ENCODE measurements at regions of chr6 and their contacts with region 1.

Region 1: GRCh38 chr6:104859225-104860146 is at the start of gene HACE1:
- DNase-seq: peak; percentile 75 to 91 (median 89)
- ATAC-seq: peak; percentile 98
- H3K4me3 ChIP-seq: peak within 1 kb of the TSS; percentile 79
- H3K4me3 Mint-ChIP-seq: peak within 1 kb of the TSS; percentile 87 to 95 (median 92)
- H3K27ac ChIP-seq: peak within 1 kb of the TSS; percentile 69
- H3K27ac Mint-ChIP-seq: peak within 1 kb of the TSS; percentile 18 to 92 (median 86)
- H3K4me1 ChIP-seq: peaks cover 8 to 9% of the 10 kb centered on the region in 2 donors
- H3K4me1 Mint-ChIP-seq: peaks cover 10 to 30% (median 18%) of the 10 kb centered on the region in 7 donors
- H3K27me3 ChIP-seq: no peaks in the 10 kb centered on the region
- H3K27me3 Mint-ChIP-seq: peaks cover 3 to 20% (median 13%) of the 10 kb centered on the region in 5 donors
- total RNA-seq, gene HACE1: 11.4 to 17.1 (median 16.1) TPM

Region 2: GRCh38 chr6:104689551-104690205 is 169.8 kb before region 1 on chr6:
- CTCF ChIA-PET with region 1: no interaction called
- POLR2A ChIA-PET with region 1: no interaction called
- intact Hi-C with region 1: loop called in 1 of 2 experiments (anchors 5 kb)
- DNase-seq: no peak
- ATAC-seq: no peak
- H3K4me3 ChIP-seq: no peak overlapping the region
- H3K4me3 Mint-ChIP-seq: no peak overlapping the region
- H3K27ac ChIP-seq: no peak overlapping the region
- H3K27ac Mint-ChIP-seq: peak overlapping the region in 1 of 9 donors; percentile 2
- H3K4me1 ChIP-seq: peaks cover 0 to 8% of the 10 kb centered on the region in 2 donors
- H3K4me1 Mint-ChIP-seq: peaks cover 7 to 21% (median 17%) of the 10 kb centered on the region in 7 donors
- H3K27me3 ChIP-seq: no peaks in the 10 kb centered on the region
- H3K27me3 Mint-ChIP-seq: no peaks in the 10 kb centered on the region

Region 3: DNA sequence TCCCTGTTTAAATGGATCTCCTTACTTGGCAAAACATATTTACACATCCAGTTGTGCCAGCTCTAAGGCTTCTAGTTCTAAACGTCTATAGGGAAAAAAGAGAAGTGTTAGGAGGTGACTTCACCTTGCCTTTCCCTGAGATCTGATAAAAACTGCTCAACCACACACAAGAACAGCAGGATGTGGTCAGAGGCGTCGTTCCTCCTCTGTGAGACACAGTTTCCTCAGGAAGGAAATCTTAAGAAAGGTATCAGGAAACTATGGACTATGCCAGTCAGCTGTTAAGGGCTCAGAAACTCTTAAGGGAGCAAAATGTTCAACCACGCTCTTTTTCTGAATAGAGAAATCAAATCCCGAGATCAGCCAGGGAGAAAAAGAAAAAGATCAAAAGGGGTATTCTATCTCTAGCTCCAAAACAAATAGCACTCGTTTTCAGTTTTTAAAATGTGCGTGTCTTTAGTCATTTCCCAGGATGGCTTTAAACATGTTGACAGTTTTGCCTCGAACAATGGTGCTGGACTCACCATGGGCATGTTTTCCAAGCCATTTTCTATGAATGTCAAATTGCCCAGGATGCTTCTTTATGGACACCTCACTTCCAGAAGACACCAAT is 154.3 kb before region 1 on chr6:
- CTCF ChIA-PET with region 1: no interaction called
- POLR2A ChIA-PET with region 1: no interaction called
- intact Hi-C with region 1: loop called in 1 of 2 experiments (anchors 10 kb)
- DNase-seq: peak in 8 of 9 donors; percentile 20 to 66 (median 60)
- ATAC-seq: peak; percentile 87
- H3K4me3 ChIP-seq: peak overlapping the region; percentile 11
- H3K4me3 Mint-ChIP-seq: peak overlapping the region; percentile 64 to 88 (median 80)
- H3K27ac ChIP-seq: no peak overlapping the region
- H3K27ac Mint-ChIP-seq: peak overlapping the region; percentile 28 to 81 (median 66)
- H3K4me1 ChIP-seq: peaks cover 20 to 30% of the 10 kb centered on the region in 2 donors
- H3K4me1 Mint-ChIP-seq: peaks cover 27 to 54% (median 46%) of the 10 kb centered on the region in 7 donors
- H3K27me3 ChIP-seq: no peaks in the 10 kb centered on the region
- H3K27me3 Mint-ChIP-seq: no peaks in the 10 kb centered on the region

Region 4: DNA sequence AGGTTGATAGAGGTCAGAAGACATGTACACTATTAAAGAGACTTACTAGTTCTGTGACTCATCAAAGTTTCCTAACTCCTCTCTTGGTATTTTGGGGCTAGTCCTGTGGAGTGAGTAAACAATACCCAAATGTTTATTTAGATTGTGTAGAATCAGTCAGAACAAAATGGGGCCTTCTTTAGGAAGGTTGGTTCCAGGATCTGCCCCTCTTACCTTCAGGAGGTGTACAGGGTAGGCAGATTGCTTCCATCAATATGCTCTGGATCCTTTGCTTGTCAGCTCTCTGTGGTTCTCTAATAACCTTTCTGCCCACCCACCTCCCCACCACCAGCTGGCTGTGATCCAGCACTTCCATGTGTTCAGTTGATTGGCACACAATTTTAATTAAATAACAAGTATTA is 213.3 kb after region 1 on chr6:
- CTCF ChIA-PET with region 1: no interaction called
- POLR2A ChIA-PET with region 1: no interaction called
- intact Hi-C with region 1: no loop called
- DNase-seq: no peak
- ATAC-seq: no peak
- H3K4me3 ChIP-seq: no peak overlapping the region
- H3K4me3 Mint-ChIP-seq: no peak overlapping the region
- H3K27ac ChIP-seq: no peak overlapping the region
- H3K27ac Mint-ChIP-seq: no peak overlapping the region
- H3K4me1 ChIP-seq: no peaks in the 10 kb centered on the region
- H3K4me1 Mint-ChIP-seq: no peaks in the 10 kb centered on the region
- H3K27me3 ChIP-seq: no peaks in the 10 kb centered on the region
- H3K27me3 Mint-ChIP-seq: peaks cover 18 to 38% (median 25%) of the 10 kb centered on the region in 5 donors

Measured in naive thymus-derived CD4-positive, alpha-beta T cell (primary cell).